ENCODE measurements at regions of chr13 and their contacts with region 1.

Region 1: DNA sequence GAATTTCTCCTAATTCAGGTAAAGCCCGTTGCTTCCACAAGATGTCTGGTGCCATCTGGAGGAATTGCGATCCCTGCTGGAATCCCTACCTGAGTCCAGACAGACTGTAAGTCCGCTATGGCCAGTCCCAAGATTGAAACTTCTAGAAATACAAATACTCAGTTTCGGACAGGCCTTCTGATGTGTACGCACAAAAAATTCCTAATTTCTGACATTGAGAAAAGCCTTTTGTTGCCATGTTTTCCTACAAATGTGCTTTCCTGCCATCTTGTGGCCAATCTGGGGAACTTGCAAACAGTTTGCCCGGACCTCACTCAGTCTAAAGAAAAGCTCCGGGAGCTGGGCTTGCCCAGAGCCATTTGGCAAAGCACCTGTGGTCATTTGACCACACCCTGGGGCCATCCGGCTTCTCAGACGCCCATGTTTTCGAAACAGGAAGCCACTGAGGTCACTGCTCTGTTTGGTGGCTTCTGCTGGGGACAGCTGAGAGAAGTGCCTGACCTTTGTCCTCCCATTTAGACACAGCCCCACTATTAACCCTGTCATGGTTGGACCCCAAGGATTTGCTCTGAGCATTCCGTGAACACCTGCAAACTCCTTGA is 79.4 kb downstream of the SLC15A1 start:
- DNase-seq: peak; percentile 52
- ATAC-seq: peak; percentile 89
- H3K4me3 ChIP-seq: peak overlapping the region in 1 of 2 experiments; percentile 16; a peak in 1 of 4 replicates
- H3K27ac ChIP-seq: no peak overlapping the region
- H3K4me1 ChIP-seq: no peaks in the 10 kb centered on the region
- H3K27me3 ChIP-seq: no peaks in the 10 kb centered on the region
- CTCF ChIP-seq: peak; percentile 80

Region 2: GRCh38 chr13:98327371-98328270 is 345.4 kb before region 1 on chr13:
- CTCF ChIA-PET with region 1: no interaction called
- POLR2A ChIA-PET with region 1: no interaction called
- in situ Hi-C with region 1: no loop called
- intact Hi-C with region 1: no loop called
- DNase-seq: no peak
- ATAC-seq: no peak
- H3K4me3 ChIP-seq: no peak overlapping the region
- H3K27ac ChIP-seq: no peak overlapping the region
- H3K4me1 ChIP-seq: no peaks in the 10 kb centered on the region
- H3K27me3 ChIP-seq: no peaks in the 10 kb centered on the region
- CTCF ChIP-seq: no peak

Region 3: GRCh38 chr13:98445340-98446233 is 227.5 kb before region 1 on chr13:
- CTCF ChIA-PET with region 1: no interaction called
- POLR2A ChIA-PET with region 1: no interaction called
- in situ Hi-C with region 1: no loop called
- intact Hi-C with region 1: loop called (anchors 5 kb)
- DNase-seq: no peak
- ATAC-seq: peak; percentile 78
- H3K4me3 ChIP-seq: no peak overlapping the region
- H3K27ac ChIP-seq: no peak overlapping the region
- H3K4me1 ChIP-seq: no peaks in the 10 kb centered on the region
- H3K27me3 ChIP-seq: no peaks in the 10 kb centered on the region
- CTCF ChIP-seq: peak; percentile 85

Measured in Panc1 (cell line).